GM13976 (cell line): ENCODE measurements at regions of chr1 and their contacts with region 1.

Region 1: GRCh38 chr1:30801771-30802198 is 44.2 kb upstream of the LAPTM5 start:
- DNase-seq: peak; percentile 84
- CTCF ChIP-seq: peak; percentile 89

Region 2: GRCh38 chr1:30911046-30911954 is 109.5 kb after region 1 on chr1:
- in situ Hi-C with region 1: loop called (anchors 5 kb)
- DNase-seq: peak; percentile 81
- CTCF ChIP-seq: peak; percentile 73